CD4-positive, alpha-beta T cell (primary cell): ENCODE measurements at regions of chr6 and their contacts with region 1.

Region 1: GRCh38 chr6:108841377-108841855 is 6.8 kb upstream of the ARMC2 start:
- DNase-seq: peak in 2 of 14 experiments; percentile 42 to 43
- ATAC-seq: no peak
- H3K4me3 ChIP-seq: no peak overlapping the region
- H3K4me3 Mint-ChIP-seq: no peak overlapping the region
- H3K27ac ChIP-seq: no peak overlapping the region
- H3K27ac Mint-ChIP-seq: no peak overlapping the region
- H3K4me1 ChIP-seq: peaks cover 13% of the 10 kb centered on the region
- H3K4me1 Mint-ChIP-seq: peaks cover 22% of the 10 kb centered on the region
- H3K27me3 ChIP-seq: no peaks in the 10 kb centered on the region
- H3K27me3 Mint-ChIP-seq: peaks cover 4% of the 10 kb centered on the region
- CTCF ChIP-seq: no peak

Region 2: DNA sequence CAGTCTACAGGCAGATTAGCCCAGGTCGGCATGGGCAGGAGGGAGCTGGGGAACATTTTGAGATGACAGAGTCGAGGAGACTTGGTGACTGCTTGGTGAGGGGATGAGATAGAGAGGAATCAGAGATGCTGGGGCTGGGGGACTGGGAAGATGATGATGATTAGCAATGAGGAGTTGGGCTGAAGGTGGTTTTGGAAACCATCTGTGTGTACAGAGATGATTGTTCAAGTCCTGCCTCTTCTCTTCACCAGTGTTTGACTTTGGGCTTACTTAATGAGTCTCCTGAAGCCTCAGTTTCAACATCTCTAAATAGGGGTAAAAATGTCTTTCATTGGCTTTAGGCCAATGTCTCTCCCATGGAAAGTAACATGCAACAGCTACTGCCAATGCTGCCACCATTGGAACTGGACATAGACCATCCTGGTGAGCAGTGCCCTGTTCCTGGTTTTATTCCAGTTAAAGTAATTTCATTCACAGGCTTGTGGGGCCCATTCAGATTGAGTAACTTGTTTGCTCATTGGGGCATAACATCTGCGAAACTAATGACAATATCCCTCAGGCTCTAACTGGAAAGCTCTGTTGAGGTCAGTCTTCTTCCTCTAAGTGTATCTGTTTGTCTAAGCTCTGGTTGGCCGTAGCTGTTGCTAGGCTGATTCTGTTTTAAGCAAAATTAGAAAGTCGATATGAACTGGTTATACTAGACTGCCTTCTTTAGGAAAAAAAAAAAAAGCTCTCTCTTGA is 105.9 kb after region 1 on chr6:
- CTCF ChIA-PET with region 1: no interaction called
- POLR2A ChIA-PET with region 1: no interaction called
- intact Hi-C with region 1: loop called in 1 of 2 experiments (anchors 5 kb)
- DNase-seq: no peak
- ATAC-seq: no peak
- H3K4me3 ChIP-seq: no peak overlapping the region
- H3K4me3 Mint-ChIP-seq: no peak overlapping the region
- H3K27ac ChIP-seq: no peak overlapping the region
- H3K27ac Mint-ChIP-seq: no peak overlapping the region
- H3K4me1 ChIP-seq: peaks cover 26% of the 10 kb centered on the region
- H3K4me1 Mint-ChIP-seq: peaks cover 65% of the 10 kb centered on the region
- H3K27me3 ChIP-seq: no peaks in the 10 kb centered on the region
- H3K27me3 Mint-ChIP-seq: no peaks in the 10 kb centered on the region
- CTCF ChIP-seq: no peak

Region 3: DNA sequence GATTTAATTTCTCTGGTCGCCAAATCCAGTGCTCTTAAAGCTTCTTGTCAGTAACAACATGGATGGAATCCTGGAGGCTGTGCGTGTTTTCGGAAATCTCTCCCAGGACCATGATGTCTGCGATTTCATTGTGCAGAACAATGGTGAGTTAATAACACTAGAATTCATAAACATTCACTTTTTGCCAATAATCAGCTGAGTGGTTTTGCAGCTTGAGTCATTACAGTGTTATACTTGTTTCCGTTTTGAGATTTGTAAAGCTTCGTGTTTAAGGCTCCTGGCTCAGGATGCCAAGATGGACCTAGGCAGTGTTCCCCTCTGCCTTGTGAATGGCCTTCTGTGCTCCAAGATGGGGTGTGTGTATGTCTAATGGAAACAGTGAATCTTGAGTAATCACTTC is 120.6 kb after region 1 on chr6:
- CTCF ChIA-PET with region 1: no interaction called
- POLR2A ChIA-PET with region 1: no interaction called
- intact Hi-C with region 1: no loop called
- DNase-seq: no peak
- ATAC-seq: no peak
- H3K4me3 ChIP-seq: no peak overlapping the region
- H3K4me3 Mint-ChIP-seq: no peak overlapping the region
- H3K27ac ChIP-seq: no peak overlapping the region
- H3K27ac Mint-ChIP-seq: no peak overlapping the region
- H3K4me1 ChIP-seq: peaks cover 21% of the 10 kb centered on the region
- H3K4me1 Mint-ChIP-seq: peaks cover 5% of the 10 kb centered on the region
- H3K27me3 ChIP-seq: no peaks in the 10 kb centered on the region
- H3K27me3 Mint-ChIP-seq: no peaks in the 10 kb centered on the region
- CTCF ChIP-seq: no peak